Activated T-helper 2 cell treated with anti-CD3 and anti-CD28 coated beads, Interferon-gamma antibody, Interleukin-2, Interleukin-4, amounts not matched to agents 10 μg/mL and 5 μg/mL and 100 μg/mL, durations not matched to agents 14 hours and 24 hours and 36 hours (primary cell): ENCODE measurements at regions of chr3 and their contacts with region 1.

Region 1: GRCh38 chr3:120348981-120349818 is at the start of gene LRRC58:
- DNase-seq: peak; percentile 85
- H3K4me3 Mint-ChIP-seq: peak within 1 kb of the TSS; percentile 83
- H3K27ac Mint-ChIP-seq: peak within 1 kb of the TSS; percentile 70
- H3K4me1 Mint-ChIP-seq: peaks cover 36% of the 10 kb centered on the region
- H3K27me3 Mint-ChIP-seq: peaks cover 26% of the 10 kb centered on the region
- total RNA-seq, gene LRRC58: 20.1 and 21.3 TPM in 2 replicates

Region 2: GRCh38 chr3:119891944-119892721 is 457.1 kb before region 1 on chr3:
- intact Hi-C with region 1: loop called (anchors 5 kb)
- DNase-seq: peak; percentile 12
- H3K4me3 Mint-ChIP-seq: no peak overlapping the region
- H3K27ac Mint-ChIP-seq: no peak overlapping the region
- H3K4me1 Mint-ChIP-seq: peaks cover 2% of the 10 kb centered on the region
- H3K27me3 Mint-ChIP-seq: no peaks in the 10 kb centered on the region

Region 3: GRCh38 chr3:119912220-119912619 is 437.0 kb before region 1 on chr3:
- intact Hi-C with region 1: loop called (anchors 5 kb)
- DNase-seq: no peak
- H3K4me3 Mint-ChIP-seq: no peak overlapping the region
- H3K27ac Mint-ChIP-seq: peak overlapping the region; percentile 75
- H3K4me1 Mint-ChIP-seq: peaks cover 21% of the 10 kb centered on the region
- H3K27me3 Mint-ChIP-seq: peaks cover 2% of the 10 kb centered on the region

Region 4: DNA sequence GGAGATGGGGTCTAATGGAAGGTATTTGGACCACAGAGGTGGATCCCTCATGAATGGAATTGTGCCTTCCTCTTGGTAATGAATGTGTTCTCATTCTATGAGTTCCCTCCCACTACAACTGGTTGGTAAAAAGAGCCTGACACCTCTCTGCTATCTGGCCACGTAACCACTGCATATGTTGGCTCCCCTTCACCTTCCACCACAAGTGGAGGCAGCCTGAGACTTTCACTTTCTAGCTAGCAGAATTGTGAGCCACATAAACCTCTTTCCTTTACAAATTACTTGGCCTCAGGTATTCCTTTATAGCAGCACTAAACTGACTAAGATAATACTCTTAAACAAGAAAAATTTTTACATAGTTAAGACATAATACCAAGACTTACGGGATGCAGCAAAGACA is 412.0 kb before region 1 on chr3:
- intact Hi-C with region 1: loop called (anchors 5 kb)
- DNase-seq: peak; percentile 22
- H3K4me3 Mint-ChIP-seq: peak overlapping the region; percentile 22
- H3K27ac Mint-ChIP-seq: peak overlapping the region; percentile 34
- H3K4me1 Mint-ChIP-seq: peaks cover 29% of the 10 kb centered on the region
- H3K27me3 Mint-ChIP-seq: no peaks in the 10 kb centered on the region

Region 5: DNA sequence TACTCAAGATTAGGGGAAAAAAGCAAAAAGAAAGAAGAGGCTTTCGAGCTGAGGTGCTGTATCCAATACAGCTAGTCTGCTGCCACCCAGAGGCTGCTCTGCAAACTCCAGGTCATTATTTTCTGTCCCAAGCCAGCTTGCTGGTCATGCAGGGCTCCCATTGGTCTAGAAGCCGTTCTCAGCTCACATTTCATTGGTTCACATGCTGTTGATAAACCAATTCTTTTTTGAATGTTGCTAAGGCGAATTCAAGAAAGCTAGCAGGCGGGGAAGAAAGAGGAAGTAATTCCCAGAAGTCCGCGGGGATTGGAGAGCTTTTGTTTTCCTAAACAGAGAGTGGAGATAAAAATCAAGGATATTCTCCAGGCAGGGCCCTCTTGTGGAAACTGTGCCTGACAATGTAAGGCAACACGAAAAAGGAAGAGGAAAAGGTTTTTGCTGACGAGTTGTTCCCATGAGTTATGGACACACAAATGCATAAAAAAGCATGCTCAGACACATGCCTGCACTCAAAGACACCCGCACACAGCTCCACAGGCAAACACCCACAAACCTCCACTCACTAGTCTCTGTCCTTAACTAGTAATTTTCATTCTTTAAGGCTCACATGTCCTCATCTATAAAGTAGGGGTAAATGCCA is 68.2 kb after region 1 on chr3:
- intact Hi-C with region 1: loop called (anchors 2 kb)
- DNase-seq: peak; percentile 81
- H3K4me3 Mint-ChIP-seq: peak overlapping the region; percentile 80
- H3K27ac Mint-ChIP-seq: no peak overlapping the region
- H3K4me1 Mint-ChIP-seq: peaks cover 14% of the 10 kb centered on the region
- H3K27me3 Mint-ChIP-seq: peaks cover 21% of the 10 kb centered on the region

Region 6: GRCh38 chr3:120550546-120550945 is 201.3 kb after region 1 on chr3:
- intact Hi-C with region 1: no loop called
- DNase-seq: no peak
- H3K4me3 Mint-ChIP-seq: no peak overlapping the region
- H3K27ac Mint-ChIP-seq: no peak overlapping the region
- H3K4me1 Mint-ChIP-seq: no peaks in the 10 kb centered on the region
- H3K27me3 Mint-ChIP-seq: peaks cover 2% of the 10 kb centered on the region